PC-3 (cell line): ENCODE measurements at regions of chr11 and their contacts with region 1.

Region 1: DNA sequence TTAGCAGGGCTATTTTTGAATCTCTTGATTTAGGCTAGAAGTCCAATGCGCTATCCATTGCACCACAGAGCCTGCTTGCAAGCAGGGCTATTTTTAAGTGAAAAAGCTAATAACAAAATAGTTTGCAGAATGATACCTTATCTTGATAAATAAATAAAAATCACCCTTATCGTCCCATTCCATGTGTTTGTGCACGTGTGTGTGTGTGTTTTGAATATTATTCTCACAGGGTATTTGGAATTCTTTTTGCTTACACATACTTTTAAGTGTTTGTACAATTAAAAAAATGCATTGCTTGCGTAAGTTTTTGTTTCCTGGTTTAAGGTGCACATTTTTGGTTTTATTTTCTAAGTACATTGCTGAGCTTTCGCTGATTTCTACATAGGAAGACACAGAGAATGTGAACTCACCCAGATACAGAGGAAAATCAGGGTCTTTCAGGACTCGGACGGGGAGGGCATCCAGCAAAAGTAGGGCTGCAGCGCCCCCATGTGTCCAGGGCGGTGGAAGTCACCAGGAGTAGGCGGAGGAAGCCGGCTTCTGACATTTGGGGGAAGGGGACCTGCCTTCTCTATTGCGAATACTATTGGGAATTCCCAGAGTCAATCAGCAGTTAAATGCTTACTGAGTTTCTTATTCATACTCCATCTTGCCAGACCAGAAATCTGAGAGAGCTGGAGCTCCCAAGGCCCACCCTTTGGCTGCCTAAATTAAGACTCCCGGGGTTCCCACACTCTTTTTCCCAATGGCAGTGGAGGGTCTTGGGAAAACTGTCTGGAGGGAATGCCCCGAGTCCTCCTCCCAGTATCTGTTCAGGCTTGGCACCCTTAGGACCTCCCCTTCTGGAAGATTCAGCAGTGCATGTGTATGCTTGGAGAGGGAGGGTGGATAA is 27.2 kb downstream of the SLC1A2 start:
- DNase-seq: peak; percentile 81
- ATAC-seq: peak; percentile 62
- H3K4me3 ChIP-seq: peak overlapping the region; percentile 58
- H3K27ac ChIP-seq: peak overlapping the region; percentile 80
- H3K4me1 ChIP-seq: peaks cover 21% of the 10 kb centered on the region
- H3K27me3 ChIP-seq: no peaks in the 10 kb centered on the region
- CTCF ChIP-seq: peak; percentile 96

Region 2: GRCh38 chr11:34585735-34586487 is 806.3 kb before region 1 on chr11:
- CTCF ChIA-PET with region 1: no interaction called
- POLR2A ChIA-PET with region 1: no interaction called
- intact Hi-C with region 1: loop called (anchors 10 kb)
- DNase-seq: peak; percentile 84
- ATAC-seq: peak; percentile 64
- H3K4me3 ChIP-seq: peak overlapping the region; percentile 19; the same call in 1 of the 2 replicates
- H3K27ac ChIP-seq: peak overlapping the region; percentile 60
- H3K4me1 ChIP-seq: peaks cover 25% of the 10 kb centered on the region
- H3K27me3 ChIP-seq: no peaks in the 10 kb centered on the region
- CTCF ChIP-seq: peak; percentile 83

Region 3: GRCh38 chr11:34977089-34977906 is 414.9 kb before region 1 on chr11:
- CTCF ChIA-PET with region 1: no interaction called
- POLR2A ChIA-PET with region 1: no interaction called
- intact Hi-C with region 1: loop called (anchors 5 kb)
- DNase-seq: peak; percentile 81
- ATAC-seq: peak; percentile 89
- H3K4me3 ChIP-seq: peak overlapping the region; percentile 38; the same call in 1 of the 2 replicates
- H3K27ac ChIP-seq: peak overlapping the region; percentile 91
- H3K4me1 ChIP-seq: peaks cover 43% of the 10 kb centered on the region
- H3K27me3 ChIP-seq: no peaks in the 10 kb centered on the region
- CTCF ChIP-seq: no peak

Region 4: GRCh38 chr11:35144136-35144741 is 247.9 kb before region 1 on chr11:
- CTCF ChIA-PET with region 1: no interaction called
- POLR2A ChIA-PET with region 1: interaction called, 3 read pairs
- intact Hi-C with region 1: loop called (anchors 5 kb)
- DNase-seq: peak; percentile 83
- ATAC-seq: no peak; the same call in 1 of the 2 replicates
- H3K4me3 ChIP-seq: peak overlapping the region; percentile 99
- H3K27ac ChIP-seq: peak overlapping the region; percentile 82
- H3K4me1 ChIP-seq: peaks cover 57% of the 10 kb centered on the region
- H3K27me3 ChIP-seq: no peaks in the 10 kb centered on the region
- CTCF ChIP-seq: no peak

Region 5: DNA sequence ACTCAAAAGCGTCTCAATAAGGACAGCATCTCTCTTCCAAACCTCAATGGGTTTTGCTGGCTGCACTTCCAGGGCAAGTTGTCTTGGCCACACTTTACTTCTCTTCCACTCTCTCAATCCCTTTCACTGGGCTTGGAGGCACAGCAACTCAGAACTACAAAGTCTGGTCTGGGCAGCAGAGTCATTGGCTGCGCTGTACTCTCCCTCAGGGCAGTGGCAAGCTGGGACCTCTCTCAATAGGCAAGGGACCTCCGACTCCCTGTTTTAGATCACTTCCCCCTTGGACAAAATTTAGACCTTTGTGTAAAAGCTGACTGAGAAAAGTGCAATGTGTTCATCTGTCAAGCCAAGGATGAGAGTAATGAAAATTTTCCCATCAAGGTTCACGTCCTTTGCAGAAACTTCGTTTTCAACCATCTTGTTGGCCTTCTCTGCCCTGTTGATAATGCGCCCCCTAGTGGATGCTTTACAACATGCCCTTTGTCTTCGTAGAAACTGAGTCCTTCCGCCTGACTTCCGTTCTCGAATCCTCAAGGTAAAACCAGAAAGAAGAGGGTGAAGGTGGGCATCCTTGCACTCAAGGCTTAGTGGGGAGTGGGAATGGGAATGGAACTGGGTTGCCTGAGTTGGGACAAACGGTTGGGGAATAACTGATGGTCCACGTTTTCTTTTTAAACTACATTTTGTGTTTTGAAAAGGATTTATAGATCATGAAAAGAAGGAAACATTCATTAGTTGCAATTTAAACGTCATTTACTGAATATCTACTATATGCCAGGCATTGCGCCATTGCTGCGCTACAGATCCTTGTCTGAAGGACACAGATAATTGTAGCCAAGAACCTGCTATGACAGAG is 154.1 kb before region 1 on chr11:
- CTCF ChIA-PET with region 1: no interaction called
- POLR2A ChIA-PET with region 1: no interaction called
- intact Hi-C with region 1: loop called (anchors 10 kb)
- DNase-seq: peak; percentile 59
- ATAC-seq: no peak
- H3K4me3 ChIP-seq: no peak overlapping the region
- H3K27ac ChIP-seq: no peak overlapping the region
- H3K4me1 ChIP-seq: peaks cover 25% of the 10 kb centered on the region
- H3K27me3 ChIP-seq: no peaks in the 10 kb centered on the region
- CTCF ChIP-seq: peak; percentile 95

Region 6: GRCh38 chr11:35363854-35364780 is 28.1 kb before region 1 on chr11:
- CTCF ChIA-PET with region 1: no interaction called
- POLR2A ChIA-PET with region 1: interaction called, 11 read pairs
- intact Hi-C with region 1: no loop called
- DNase-seq: peak; percentile 87
- ATAC-seq: peak; percentile 84
- H3K4me3 ChIP-seq: no peak overlapping the region
- H3K27ac ChIP-seq: peak overlapping the region; percentile 51
- H3K4me1 ChIP-seq: peaks cover 31% of the 10 kb centered on the region
- H3K27me3 ChIP-seq: no peaks in the 10 kb centered on the region
- CTCF ChIP-seq: no peak

Region 7: DNA sequence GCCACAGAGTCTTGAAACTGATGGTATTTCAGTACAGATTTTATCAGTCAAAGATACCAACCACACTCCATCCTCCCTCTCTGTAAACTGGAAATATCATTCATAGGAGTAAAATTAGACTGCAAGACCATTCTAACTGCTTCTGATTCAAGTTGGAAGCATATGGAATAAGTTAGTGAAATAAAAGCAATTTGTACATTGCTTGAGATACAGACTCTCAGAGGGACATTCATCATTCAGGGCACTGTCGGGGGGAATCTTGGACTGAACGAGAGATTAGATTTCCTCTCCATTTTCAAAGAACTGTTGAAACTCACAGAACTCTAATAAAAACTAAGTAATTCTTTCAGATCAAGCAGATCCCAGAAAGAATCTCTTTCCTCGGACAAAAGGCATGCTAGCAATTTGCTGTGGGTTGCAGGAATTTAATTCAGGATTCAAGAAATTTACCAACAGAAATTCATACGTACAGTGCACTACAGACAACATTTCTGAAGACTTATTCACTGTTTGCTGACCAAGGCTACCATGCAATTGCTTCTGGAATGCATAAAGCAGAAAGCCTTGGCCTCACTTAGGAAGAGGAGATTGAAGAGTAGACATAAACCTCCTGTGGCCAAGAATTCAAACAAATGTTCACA is 99.2 kb after region 1 on chr11:
- CTCF ChIA-PET with region 1: no interaction called
- POLR2A ChIA-PET with region 1: no interaction called
- intact Hi-C with region 1: no loop called
- DNase-seq: peak; percentile 57
- ATAC-seq: peak; percentile 54
- H3K4me3 ChIP-seq: no peak overlapping the region
- H3K27ac ChIP-seq: no peak overlapping the region
- H3K4me1 ChIP-seq: peaks cover 8% of the 10 kb centered on the region
- H3K27me3 ChIP-seq: no peaks in the 10 kb centered on the region
- CTCF ChIP-seq: no peak